ENCODE measurements at regions of chr5 and their contacts with region 1.

Region 1: GRCh38 chr5:157761690-157762621 is 18.4 kb downstream of the LSM11 start:
- DNase-seq: peak in 4 of 14 experiments; percentile 30 to 66 (median 59)
- ATAC-seq: peak; percentile 82
- H3K4me3 ChIP-seq: no peak overlapping the region
- H3K4me3 Mint-ChIP-seq: no peak overlapping the region
- H3K27ac ChIP-seq: no peak overlapping the region
- H3K27ac Mint-ChIP-seq: no peak overlapping the region
- H3K4me1 ChIP-seq: no peaks in the 10 kb centered on the region
- H3K4me1 Mint-ChIP-seq: peaks cover 6% of the 10 kb centered on the region
- H3K27me3 ChIP-seq: no peaks in the 10 kb centered on the region
- H3K27me3 Mint-ChIP-seq: no peaks in the 10 kb centered on the region
- CTCF ChIP-seq: peak; percentile 88

Region 2: GRCh38 chr5:157511651-157512644 is 250.0 kb before region 1 on chr5:
- CTCF ChIA-PET with region 1: no interaction called
- POLR2A ChIA-PET with region 1: no interaction called
- intact Hi-C with region 1: no loop called
- DNase-seq: peak in 7 of 14 experiments; percentile 11 to 49 (median 33)
- ATAC-seq: no peak
- H3K4me3 ChIP-seq: no peak overlapping the region
- H3K4me3 Mint-ChIP-seq: no peak overlapping the region
- H3K27ac ChIP-seq: peak overlapping the region in 1 of 2 donors; percentile 16
- H3K27ac Mint-ChIP-seq: no peak overlapping the region
- H3K4me1 ChIP-seq: peaks cover 6% of the 10 kb centered on the region
- H3K4me1 Mint-ChIP-seq: no peaks in the 10 kb centered on the region
- H3K27me3 ChIP-seq: no peaks in the 10 kb centered on the region
- H3K27me3 Mint-ChIP-seq: no peaks in the 10 kb centered on the region
- CTCF ChIP-seq: no peak

Region 3: DNA sequence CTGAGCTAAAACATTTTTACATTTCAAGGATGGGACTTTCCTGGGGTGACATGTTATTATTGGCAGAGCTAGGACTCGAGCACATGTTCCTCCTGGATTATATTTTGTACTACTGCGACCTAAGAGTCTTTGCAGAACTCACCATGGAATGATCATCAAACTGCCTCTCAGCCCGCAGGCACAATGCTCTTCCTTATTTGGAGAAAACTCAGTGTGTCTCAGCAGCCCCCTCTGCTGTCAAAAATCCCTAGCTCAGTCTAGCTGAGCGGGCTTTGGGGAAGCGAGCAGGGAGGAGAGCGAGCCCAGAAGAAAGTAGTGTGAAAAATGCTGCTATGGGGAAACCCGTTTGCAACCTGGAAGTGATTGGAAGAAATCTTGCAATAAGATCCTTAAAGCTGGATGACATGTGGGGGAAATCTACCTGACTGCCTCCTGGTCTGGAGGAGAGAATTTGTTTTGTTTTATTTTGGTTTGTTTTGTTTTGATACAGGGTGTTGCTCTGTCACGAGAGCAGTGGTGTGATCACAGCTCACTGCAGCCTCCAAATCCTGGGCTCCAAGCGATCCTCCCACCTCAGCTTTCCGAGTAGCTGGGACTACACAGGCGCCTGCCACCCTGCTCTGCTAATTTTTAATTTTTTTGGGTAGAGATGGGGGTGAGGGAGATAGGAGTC is 186.9 kb after region 1 on chr5:
- CTCF ChIA-PET with region 1: interaction called, 3 read pairs
- POLR2A ChIA-PET with region 1: no interaction called
- intact Hi-C with region 1: loop called (anchors 1 to 2 kb)
- DNase-seq: peak; percentile 62 to 87 (median 72)
- ATAC-seq: peak; percentile 99
- H3K4me3 ChIP-seq: no peak overlapping the region
- H3K4me3 Mint-ChIP-seq: no peak overlapping the region
- H3K27ac ChIP-seq: no peak overlapping the region
- H3K27ac Mint-ChIP-seq: no peak overlapping the region
- H3K4me1 ChIP-seq: peaks cover 6% of the 10 kb centered on the region
- H3K4me1 Mint-ChIP-seq: peaks cover 5% of the 10 kb centered on the region
- H3K27me3 ChIP-seq: peaks cover 4% of the 10 kb centered on the region in 2 experiments
- H3K27me3 Mint-ChIP-seq: peaks cover 13% of the 10 kb centered on the region
- CTCF ChIP-seq: peak; percentile 72

Region 4: DNA sequence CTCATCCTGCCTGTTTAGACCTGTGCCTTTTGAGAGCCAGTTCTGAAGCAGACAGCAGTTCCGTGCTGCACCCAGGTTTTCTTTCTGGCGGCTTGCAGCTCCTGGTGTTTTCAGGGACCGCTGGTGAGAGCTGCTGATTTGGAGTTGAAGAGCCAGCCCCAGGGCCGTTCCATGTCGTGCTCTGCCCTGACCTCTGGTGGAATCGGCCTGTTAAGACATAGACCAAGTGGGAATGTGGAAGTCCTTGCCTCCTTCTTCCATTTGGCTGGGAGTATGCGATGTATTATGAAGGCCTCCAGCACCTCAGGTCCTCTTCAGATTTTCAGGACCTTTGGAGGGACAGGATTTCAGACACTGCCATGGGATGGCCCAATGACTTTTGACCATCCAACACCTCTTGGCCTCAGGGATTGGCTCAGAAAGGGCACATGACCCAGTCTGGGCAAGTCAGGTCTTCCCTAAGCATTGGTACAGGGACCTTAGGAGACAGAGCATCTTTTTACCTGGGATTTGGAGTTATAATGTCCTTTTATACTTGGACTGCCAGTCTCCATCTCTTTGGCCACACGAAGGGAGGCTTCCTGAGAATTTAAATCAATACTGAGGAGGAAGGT is 233.1 kb after region 1 on chr5:
- CTCF ChIA-PET with region 1: no interaction called
- POLR2A ChIA-PET with region 1: no interaction called
- intact Hi-C with region 1: loop called in 1 of 2 experiments (anchors 2 kb)
- DNase-seq: peak in 13 of 14 experiments; percentile 9 to 68 (median 29)
- ATAC-seq: peak; percentile 75
- H3K4me3 ChIP-seq: peak overlapping the region; percentile 20
- H3K4me3 Mint-ChIP-seq: peak overlapping the region; percentile 52
- H3K27ac ChIP-seq: no peak overlapping the region
- H3K27ac Mint-ChIP-seq: no peak overlapping the region
- H3K4me1 ChIP-seq: peaks cover 23% of the 10 kb centered on the region
- H3K4me1 Mint-ChIP-seq: peaks cover 26% of the 10 kb centered on the region
- H3K27me3 ChIP-seq: peaks cover 8 to 11% of the 10 kb centered on the region in 2 experiments
- H3K27me3 Mint-ChIP-seq: peaks cover 56% of the 10 kb centered on the region
- CTCF ChIP-seq: peak; percentile 59

Measured in CD4-positive, alpha-beta T cell (primary cell).